Posterior vena cava (tissue), 2 donors: ENCODE measurements at regions of chr17 and their contacts with region 1.

Region 1: GRCh38 chr17:29162738-29163341 is 17.4 kb downstream of the MYO18A start:
- DNase-seq: no peak

Region 2: GRCh38 chr17:29069526-29070041 is 93.3 kb before region 1 on chr17:
- intact Hi-C with region 1: no loop called
- DNase-seq: no peak

Region 3: GRCh38 chr17:29219378-29220047 is 56.7 kb after region 1 on chr17:
- intact Hi-C with region 1: loop called in 1 of 2 experiments (anchors 10 kb)
- DNase-seq: peak; percentile 87